PC-3 (cell line): ENCODE measurements at regions of chr3 and their contacts with region 1.

Region 1: DNA sequence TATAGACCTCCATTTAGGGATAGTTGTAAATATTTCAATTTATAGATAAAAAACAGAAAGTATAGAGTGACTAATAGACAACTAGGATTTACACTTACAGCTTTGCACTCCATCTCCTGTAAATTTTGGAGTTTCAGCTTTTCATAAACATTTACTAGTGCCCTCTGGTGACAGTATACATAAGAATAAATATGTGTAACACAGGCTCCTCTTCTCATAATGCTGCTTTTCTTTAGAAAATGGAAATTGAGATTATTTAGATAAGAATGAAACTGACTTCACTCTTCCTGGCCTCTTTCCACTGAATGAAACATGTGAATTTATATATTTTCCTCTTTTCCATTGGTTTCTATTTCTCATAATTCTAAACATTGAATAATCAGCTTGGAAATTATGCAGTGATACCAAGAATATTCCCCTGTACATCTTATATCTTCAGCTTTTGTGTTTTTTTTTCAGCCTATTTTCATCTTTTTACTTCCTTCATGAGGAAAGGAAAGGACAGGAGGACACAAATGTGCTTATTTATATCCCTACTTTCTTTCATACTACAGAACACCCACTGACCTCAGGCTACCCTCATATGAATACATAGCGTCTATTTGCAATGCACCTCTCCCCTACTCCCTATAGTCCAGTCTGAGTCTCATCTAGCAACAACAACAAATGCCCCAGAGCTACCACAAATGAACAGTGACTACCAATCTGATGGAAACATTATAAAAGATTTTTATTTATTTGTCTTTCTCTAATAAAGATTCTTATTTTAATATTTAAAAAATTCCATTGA is 103.1 kb upstream of the CCDC39 start:
- DNase-seq: peak; percentile 23
- ATAC-seq: peak; percentile 33; the same call in 1 of the 2 replicates
- H3K4me3 ChIP-seq: no peak overlapping the region
- H3K27ac ChIP-seq: no peak overlapping the region
- H3K4me1 ChIP-seq: no peaks in the 10 kb centered on the region
- H3K27me3 ChIP-seq: peaks cover 20% of the 10 kb centered on the region
- CTCF ChIP-seq: peak; percentile 40; the same call in 1 of the 2 replicates

Region 2: DNA sequence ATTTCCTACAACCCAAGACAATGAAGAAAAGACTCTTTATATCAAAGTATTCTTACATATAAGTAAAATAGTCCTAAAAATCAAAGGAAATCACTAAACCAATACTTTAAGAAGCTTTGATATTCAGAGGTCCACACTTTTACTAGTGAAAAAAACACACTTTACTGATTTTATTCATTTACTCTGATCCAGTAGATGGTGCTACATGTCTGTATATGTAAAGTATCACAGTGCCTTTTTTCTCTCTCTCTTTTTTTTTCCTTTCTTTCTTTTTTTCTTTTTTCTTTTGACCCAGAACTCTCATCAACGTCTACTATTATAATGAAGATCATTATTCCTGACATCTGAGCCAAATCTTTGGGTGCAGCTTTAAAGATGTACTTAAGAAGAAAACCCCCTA is 92.3 kb before region 1 on chr3:
- CTCF ChIA-PET with region 1: no interaction called
- POLR2A ChIA-PET with region 1: no interaction called
- intact Hi-C with region 1: loop called (anchors 1 kb)
- DNase-seq: peak; percentile 17
- ATAC-seq: no peak
- H3K4me3 ChIP-seq: no peak overlapping the region
- H3K27ac ChIP-seq: no peak overlapping the region
- H3K4me1 ChIP-seq: no peaks in the 10 kb centered on the region
- H3K27me3 ChIP-seq: peaks cover 44% of the 10 kb centered on the region
- CTCF ChIP-seq: peak; percentile 55